ENCODE measurements at regions of chr16 and their contacts with region 1.

Region 1: DNA sequence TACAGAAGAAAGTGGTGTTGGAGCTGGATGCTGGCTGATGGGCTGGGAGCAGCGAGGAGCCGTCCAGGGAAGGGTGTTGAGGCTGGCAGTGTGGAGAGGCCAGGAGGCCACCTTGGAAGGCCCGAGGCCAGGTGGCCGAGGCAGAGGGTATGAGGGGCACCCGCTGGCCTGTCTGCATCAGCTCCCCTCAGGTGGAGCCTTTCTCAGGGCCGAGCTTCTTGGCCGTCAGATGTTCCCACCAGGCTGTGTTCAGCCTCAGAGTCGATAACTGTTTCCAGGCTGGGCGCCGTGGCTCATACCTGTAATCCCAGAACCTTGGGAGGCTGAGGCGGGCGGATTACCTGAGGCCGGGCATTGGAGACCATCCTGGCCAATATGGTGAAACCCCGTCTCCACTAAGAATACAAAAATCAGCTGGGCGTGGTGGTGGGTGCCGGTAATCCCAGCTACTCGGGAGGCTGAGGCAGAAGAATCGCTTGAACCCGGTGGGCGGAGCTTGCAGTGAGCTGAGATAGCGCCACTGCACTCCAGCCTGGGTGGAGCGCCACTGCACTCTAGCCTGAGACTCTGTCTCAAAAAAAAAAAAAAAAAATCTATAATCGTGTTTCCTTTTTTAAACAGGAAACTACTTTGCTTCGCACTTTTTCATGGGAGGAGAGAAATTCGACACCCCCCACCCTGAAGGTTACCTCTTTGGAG is 25.3 kb downstream of the MGRN1 start:
- DNase-seq: peak; percentile 42
- H3K4me3 Mint-ChIP-seq: no peak overlapping the region
- H3K27ac Mint-ChIP-seq: peak overlapping the region; percentile 54
- H3K4me1 Mint-ChIP-seq: peaks cover 36% of the 10 kb centered on the region
- H3K27me3 Mint-ChIP-seq: no peaks in the 10 kb centered on the region

Region 2: GRCh38 chr16:4606354-4606753 is 43.5 kb before region 1 on chr16:
- CTCF ChIA-PET with region 1: no interaction called
- POLR2A ChIA-PET with region 1: no interaction called
- DNase-seq: no peak
- H3K4me3 Mint-ChIP-seq: no peak overlapping the region
- H3K27ac Mint-ChIP-seq: no peak overlapping the region
- H3K4me1 Mint-ChIP-seq: no peaks in the 10 kb centered on the region
- H3K27me3 Mint-ChIP-seq: peaks cover 2% of the 10 kb centered on the region

Region 3: DNA sequence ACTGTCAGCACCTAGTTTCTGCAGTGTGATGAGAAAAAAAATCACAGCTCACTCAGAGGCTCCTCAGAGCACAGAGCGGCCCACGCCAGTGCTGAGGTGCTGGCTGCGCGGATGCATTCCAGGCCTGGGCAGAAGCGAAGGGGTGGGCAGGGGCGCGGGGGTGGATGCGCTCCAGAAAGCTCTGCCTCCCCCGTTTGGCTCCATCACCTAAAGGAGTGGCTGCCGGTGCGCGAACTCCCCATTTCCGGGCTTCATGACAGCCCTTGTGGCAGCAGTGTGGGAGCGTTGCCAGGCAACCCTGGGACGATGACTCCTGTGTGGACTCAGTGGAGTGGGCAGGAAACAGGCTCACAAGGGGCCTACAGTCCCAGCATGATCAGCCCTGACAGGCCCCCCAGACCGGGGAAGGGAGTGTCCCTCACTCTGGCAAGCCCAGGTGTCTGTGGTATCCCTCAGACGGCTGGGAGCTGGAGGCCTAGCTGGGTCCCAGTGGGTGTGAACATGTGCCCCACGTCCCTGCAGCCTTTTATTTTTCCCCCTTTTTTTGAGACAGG is 10.6 kb after region 1 on chr16:
- CTCF ChIA-PET with region 1: interaction called, 18 read pairs
- POLR2A ChIA-PET with region 1: interaction called, 3 read pairs
- DNase-seq: peak; percentile 86
- H3K4me3 Mint-ChIP-seq: peak overlapping the region; percentile 22
- H3K27ac Mint-ChIP-seq: peak overlapping the region; percentile 88
- H3K4me1 Mint-ChIP-seq: peaks cover 69% of the 10 kb centered on the region
- H3K27me3 Mint-ChIP-seq: no peaks in the 10 kb centered on the region

Measured in activated CD4-positive, alpha-beta T cell treated with anti-CD3 and anti-CD28 coated beads, Interleukin-2, amount 10 ng/mL, durations not matched to agents 7 days and 5 days (primary cell).